Sciatic nerve (tissue), 2 donors: ENCODE measurements at regions of chr17 and their contacts with region 1.

Region 1: DNA sequence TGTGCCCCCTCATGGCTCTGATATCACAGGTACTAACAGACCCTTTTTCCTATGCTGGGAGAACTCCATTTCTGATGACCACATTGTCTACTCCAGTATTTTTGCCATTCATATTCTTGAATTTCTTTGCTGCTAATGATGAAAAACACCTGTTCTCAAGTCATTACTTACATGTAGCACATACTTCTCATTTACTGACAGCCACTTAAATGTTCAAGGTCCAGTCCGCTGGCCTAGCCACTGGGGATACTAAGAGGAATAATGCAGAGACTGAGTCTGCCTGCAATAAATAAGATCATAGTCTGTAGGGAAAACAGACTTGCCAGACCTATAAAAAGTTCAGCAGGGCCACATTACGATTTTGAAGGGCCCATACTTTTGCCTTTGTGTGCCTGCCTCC is 27.5 kb downstream of the TEX14 start:
- DNase-seq: no peak
- ATAC-seq: no peak

Region 2: DNA sequence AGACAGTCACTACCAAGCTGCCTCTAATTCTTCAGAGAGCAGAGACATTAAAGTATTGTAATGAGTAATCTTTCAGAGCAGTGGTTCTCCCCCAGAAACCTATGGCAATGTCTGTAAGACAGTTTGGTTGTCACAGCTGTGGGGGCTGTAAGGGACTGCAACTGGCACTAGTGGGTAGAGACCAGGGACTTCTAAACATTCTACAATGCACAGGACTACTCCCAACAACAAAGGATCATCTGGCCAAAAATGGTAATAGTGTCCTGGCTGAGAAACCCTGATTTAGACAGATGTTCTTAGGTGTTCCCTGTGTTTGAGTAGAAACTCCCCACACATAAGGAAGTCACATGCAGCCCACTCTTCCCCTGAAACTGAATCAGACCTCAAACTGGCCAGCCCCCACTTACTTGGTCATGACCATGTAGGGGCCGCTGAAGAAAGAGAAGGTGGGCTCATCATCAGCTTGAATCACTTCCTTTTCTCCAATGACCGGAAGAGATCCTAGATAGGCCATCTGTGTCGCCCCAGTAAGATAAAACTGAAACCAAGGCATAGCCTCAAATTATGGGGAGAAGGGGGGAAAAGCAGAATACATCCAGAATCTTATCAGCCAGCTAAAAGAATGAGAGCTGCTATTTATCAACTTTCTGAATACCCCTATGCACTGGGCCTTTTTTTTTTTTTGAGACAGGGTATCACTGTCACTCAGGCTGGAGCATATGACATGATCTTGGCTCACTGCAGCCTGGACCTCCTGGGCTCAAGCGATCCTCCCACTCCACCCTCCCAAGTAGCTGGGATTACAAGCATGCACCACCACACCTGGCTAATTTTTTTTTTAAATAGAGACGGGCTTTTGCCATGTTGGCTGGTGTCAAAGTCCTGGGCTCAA is 48.3 kb before region 1 on chr17:
- intact Hi-C with region 1: no loop called
- DNase-seq: no peak
- ATAC-seq: no peak

Region 3: GRCh38 chr17:58741121-58741625 is 76.9 kb after region 1 on chr17:
- intact Hi-C with region 1: no loop called
- DNase-seq: no peak
- ATAC-seq: no peak

Region 4: GRCh38 chr17:60284709-60285108 is 1620.4 kb after region 1 on chr17:
- intact Hi-C with region 1: loop called (anchors 5 kb)
- DNase-seq: no peak
- ATAC-seq: no peak